CD4-positive, alpha-beta memory T cell (primary cell): ENCODE measurements at regions of chr15 and their contacts with region 1.

Region 1: GRCh38 chr15:50315814-50316630 is 39.0 kb downstream of the GABPB1 start:
- DNase-seq: peak in 4 of 5 donors; percentile 35 to 50 (median 42)
- H3K4me3 ChIP-seq: no peak overlapping the region
- H3K4me3 Mint-ChIP-seq: no peak overlapping the region
- H3K27ac ChIP-seq: no peak overlapping the region
- H3K27ac Mint-ChIP-seq: no peak overlapping the region
- H3K4me1 ChIP-seq: peaks cover 17% of the 10 kb centered on the region
- H3K4me1 Mint-ChIP-seq: peaks cover 15 to 21% (median 17%) of the 10 kb centered on the region in 4 donors
- H3K27me3 ChIP-seq: no peaks in the 10 kb centered on the region
- H3K27me3 Mint-ChIP-seq: no peaks in the 10 kb centered on the region

Region 2: DNA sequence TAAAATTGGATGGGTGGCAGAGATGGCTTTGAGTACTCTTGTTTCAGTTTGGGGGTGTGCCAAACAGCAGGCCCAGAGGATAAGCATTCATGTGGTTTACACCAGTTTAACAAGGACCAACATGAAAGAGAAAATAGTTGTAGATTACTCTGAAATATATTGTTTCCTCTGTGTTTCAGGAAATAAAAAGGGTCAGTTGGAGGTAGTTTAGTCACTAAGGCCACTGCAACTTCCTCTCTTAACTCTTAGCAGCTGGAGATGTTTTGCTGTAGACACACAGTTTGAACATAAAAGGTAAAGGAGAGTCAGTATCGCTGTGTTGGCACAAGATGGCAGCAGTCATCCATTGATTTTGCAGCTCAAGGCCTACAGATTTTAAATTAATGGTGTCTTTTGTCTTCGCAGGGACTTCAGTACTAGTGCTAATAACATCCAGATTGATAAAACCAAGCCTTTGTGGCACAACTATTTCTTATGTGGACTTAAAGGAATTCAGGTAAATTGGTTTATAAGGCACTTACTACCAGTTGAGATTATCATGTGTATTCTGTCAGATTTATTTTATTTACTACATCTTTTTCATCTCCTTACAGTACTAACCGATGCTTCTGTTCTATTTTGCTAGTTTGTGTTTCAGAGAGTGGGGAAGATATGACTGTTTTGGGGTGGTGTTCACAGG is 1080.4 kb before region 1 on chr15:
- CTCF ChIA-PET with region 1: no interaction called
- POLR2A ChIA-PET with region 1: no interaction called
- intact Hi-C with region 1: loop called (anchors 1 kb)
- DNase-seq: peak; percentile 36 to 46 (median 41)
- H3K4me3 ChIP-seq: no peak overlapping the region
- H3K4me3 Mint-ChIP-seq: no peak overlapping the region
- H3K27ac ChIP-seq: no peak overlapping the region
- H3K27ac Mint-ChIP-seq: peak overlapping the region in 6 of 7 donors; percentile 31 to 86 (median 70)
- H3K4me1 ChIP-seq: peaks cover 10% of the 10 kb centered on the region
- H3K4me1 Mint-ChIP-seq: peaks cover 10 to 16% (median 13%) of the 10 kb centered on the region in 4 donors
- H3K27me3 ChIP-seq: no peaks in the 10 kb centered on the region
- H3K27me3 Mint-ChIP-seq: no peaks in the 10 kb centered on the region

Region 3: GRCh38 chr15:49918121-49918520 is 397.9 kb before region 1 on chr15:
- CTCF ChIA-PET with region 1: no interaction called
- POLR2A ChIA-PET with region 1: no interaction called
- intact Hi-C with region 1: no loop called
- DNase-seq: no peak
- H3K4me3 ChIP-seq: no peak overlapping the region
- H3K4me3 Mint-ChIP-seq: no peak overlapping the region
- H3K27ac ChIP-seq: no peak overlapping the region
- H3K27ac Mint-ChIP-seq: no peak overlapping the region
- H3K4me1 ChIP-seq: no peaks in the 10 kb centered on the region
- H3K4me1 Mint-ChIP-seq: peaks cover 0 to 1% (median 0%) of the 10 kb centered on the region in 4 donors
- H3K27me3 ChIP-seq: no peaks in the 10 kb centered on the region
- H3K27me3 Mint-ChIP-seq: no peaks in the 10 kb centered on the region

Region 4: GRCh38 chr15:50145451-50145872 is 170.6 kb before region 1 on chr15:
- CTCF ChIA-PET with region 1: no interaction called
- POLR2A ChIA-PET with region 1: no interaction called
- intact Hi-C with region 1: loop called (anchors 10 kb)
- DNase-seq: peak in 4 of 5 donors; percentile 28 to 50 (median 34)
- H3K4me3 ChIP-seq: no peak overlapping the region
- H3K4me3 Mint-ChIP-seq: no peak overlapping the region
- H3K27ac ChIP-seq: no peak overlapping the region
- H3K27ac Mint-ChIP-seq: no peak overlapping the region
- H3K4me1 ChIP-seq: no peaks in the 10 kb centered on the region
- H3K4me1 Mint-ChIP-seq: no peaks in the 10 kb centered on the region
- H3K27me3 ChIP-seq: no peaks in the 10 kb centered on the region
- H3K27me3 Mint-ChIP-seq: no peaks in the 10 kb centered on the region

Region 5: GRCh38 chr15:50182219-50183013 is 133.6 kb before region 1 on chr15:
- CTCF ChIA-PET with region 1: interaction called, 44 read pairs
- POLR2A ChIA-PET with region 1: interaction called, 4 read pairs
- intact Hi-C with region 1: loop called (anchors 1 kb)
- DNase-seq: peak in 4 of 5 donors; percentile 27 to 39 (median 34)
- H3K4me3 ChIP-seq: peak overlapping the region; percentile 32 to 65
- H3K4me3 Mint-ChIP-seq: peak overlapping the region; percentile 91 to 98 (median 92)
- H3K27ac ChIP-seq: no peak overlapping the region
- H3K27ac Mint-ChIP-seq: peak overlapping the region in 4 of 7 donors; percentile 29 to 78 (median 58)
- H3K4me1 ChIP-seq: peaks cover 10% of the 10 kb centered on the region
- H3K4me1 Mint-ChIP-seq: peaks cover 9 to 23% (median 13%) of the 10 kb centered on the region in 4 donors
- H3K27me3 ChIP-seq: no peaks in the 10 kb centered on the region
- H3K27me3 Mint-ChIP-seq: peaks cover 5 to 15% of the 10 kb centered on the region in 2 donors

Region 6: GRCh38 chr15:50302581-50302980 is 13.4 kb before region 1 on chr15:
- CTCF ChIA-PET with region 1: interaction called, 10 read pairs
- POLR2A ChIA-PET with region 1: no interaction called
- intact Hi-C with region 1: no loop called
- DNase-seq: no peak
- H3K4me3 ChIP-seq: no peak overlapping the region
- H3K4me3 Mint-ChIP-seq: no peak overlapping the region
- H3K27ac ChIP-seq: no peak overlapping the region
- H3K27ac Mint-ChIP-seq: peak overlapping the region in 1 of 7 donors; percentile 64
- H3K4me1 ChIP-seq: no peaks in the 10 kb centered on the region
- H3K4me1 Mint-ChIP-seq: peaks cover 0 to 3% (median 0%) of the 10 kb centered on the region in 4 donors
- H3K27me3 ChIP-seq: no peaks in the 10 kb centered on the region
- H3K27me3 Mint-ChIP-seq: no peaks in the 10 kb centered on the region